ENCODE measurements at regions of chr11 and their contacts with region 1.

Region 1: DNA sequence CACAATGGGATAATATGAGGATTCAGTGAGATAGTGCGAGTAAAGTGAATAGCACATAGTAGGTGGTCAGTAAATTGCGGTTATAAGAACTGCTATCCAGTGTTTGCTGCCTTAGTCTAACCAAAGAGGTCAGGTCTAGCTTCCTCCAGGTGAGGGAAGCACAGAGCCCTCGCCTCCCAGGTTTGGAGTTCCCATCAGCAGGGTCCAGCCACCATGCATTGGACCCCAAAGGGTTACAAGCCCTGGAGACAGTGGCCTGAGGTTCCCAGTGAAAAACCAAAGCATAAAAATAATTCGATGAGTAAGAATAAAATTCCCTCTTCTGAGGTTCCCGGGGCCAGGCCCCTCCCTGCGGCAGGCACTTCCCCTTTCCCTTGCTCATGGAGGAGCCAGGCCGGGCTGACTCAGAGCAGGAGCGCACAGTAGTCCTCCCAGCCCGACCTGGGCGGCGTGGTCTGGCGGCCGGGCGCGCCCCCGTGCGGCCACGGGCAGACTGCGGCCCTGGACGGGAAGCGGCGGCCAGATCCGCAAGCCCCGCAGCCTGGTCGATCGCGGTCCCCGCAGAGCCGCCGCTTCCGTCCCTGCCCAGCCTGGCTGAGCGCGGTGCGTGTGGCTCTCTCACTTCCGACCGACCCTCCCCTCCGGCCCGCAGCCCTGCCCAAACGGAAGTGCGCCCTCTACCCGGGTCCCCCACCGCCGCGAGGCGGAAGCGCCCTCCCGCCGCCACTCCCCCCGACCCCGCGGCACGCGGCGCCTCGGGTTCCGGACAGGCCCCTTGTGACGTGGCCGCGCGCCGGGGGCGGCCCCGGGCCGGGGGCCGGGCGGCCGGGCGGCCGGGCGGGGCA is at the start of gene SLC39A13:
- DNase-seq: peak; percentile 93
- H3K4me3 Mint-ChIP-seq: peak within 1 kb of the TSS; percentile 94
- H3K27ac Mint-ChIP-seq: peak within 1 kb of the TSS; percentile 92
- H3K4me1 Mint-ChIP-seq: peaks cover 21% of the 10 kb centered on the region
- H3K27me3 Mint-ChIP-seq: no peaks in the 10 kb centered on the region
- total RNA-seq, gene SLC39A13: 15.5 and 16.2 TPM in 2 replicates

Region 2: GRCh38 chr11:46936138-46937110 is 471.5 kb before region 1 on chr11 and contains the start of gene CSTPP1:
- intact Hi-C with region 1: loop called (anchors 1 kb)
- DNase-seq: peak; percentile 89
- H3K4me3 Mint-ChIP-seq: peak within 1 kb of the TSS; percentile 92
- H3K27ac Mint-ChIP-seq: peak within 1 kb of the TSS; percentile 88
- H3K4me1 Mint-ChIP-seq: peaks cover 14% of the 10 kb centered on the region
- H3K27me3 Mint-ChIP-seq: peaks cover 7% of the 10 kb centered on the region
- total RNA-seq, gene CSTPP1: 15.1 and 16.7 TPM in 2 replicates

Region 3: DNA sequence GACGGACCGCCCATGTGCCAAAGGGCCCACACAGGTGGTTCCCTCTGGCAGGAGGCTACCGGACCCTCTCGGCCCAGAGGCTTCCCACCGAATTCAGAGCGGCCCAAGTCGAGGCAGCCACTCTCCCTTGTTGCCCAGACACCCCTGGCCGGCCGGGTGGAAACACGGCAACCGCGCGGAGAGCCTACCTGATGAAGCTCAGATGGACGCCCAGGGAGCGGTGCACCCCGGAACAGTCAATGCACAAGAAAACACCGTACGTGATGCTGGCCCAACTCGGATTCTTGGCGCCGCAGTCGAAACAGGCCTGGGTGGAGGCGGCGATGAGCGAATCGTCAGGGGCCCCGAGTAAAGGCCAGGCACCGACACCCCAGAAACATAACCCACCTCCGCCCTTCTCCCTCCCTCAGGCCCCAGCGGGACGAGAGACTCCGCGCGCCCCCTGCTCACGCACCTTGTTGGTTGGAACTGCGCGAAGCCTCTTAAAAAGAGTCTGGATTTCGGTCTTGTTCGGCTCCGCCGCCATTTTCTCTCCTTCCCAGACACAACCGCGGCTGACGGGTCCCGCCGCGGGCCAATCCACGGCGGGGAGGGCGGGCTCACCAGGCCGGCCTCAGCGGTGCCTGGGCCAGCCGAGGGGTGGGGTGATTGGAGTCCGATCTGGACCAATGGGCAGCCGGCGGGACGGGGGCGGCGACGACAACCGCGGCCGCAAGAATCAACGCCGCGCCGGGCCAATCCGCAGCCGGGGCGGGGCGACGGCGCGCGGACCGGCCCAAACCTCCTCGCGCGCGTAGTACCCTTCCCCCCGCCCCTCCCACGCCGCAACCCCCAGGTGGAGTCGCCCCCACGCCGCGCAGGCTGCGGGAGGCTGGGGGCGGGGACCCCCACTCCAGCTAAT is 231.4 kb before region 1 on chr11 and contains the start of gene ARFGAP2:
- intact Hi-C with region 1: loop called (anchors 1 kb)
- DNase-seq: peak; percentile 96
- H3K4me3 Mint-ChIP-seq: peak within 1 kb of the TSS; percentile 97
- H3K27ac Mint-ChIP-seq: peak within 1 kb of the TSS; percentile 100
- H3K4me1 Mint-ChIP-seq: peaks cover 36% of the 10 kb centered on the region
- H3K27me3 Mint-ChIP-seq: no peaks in the 10 kb centered on the region
- total RNA-seq, gene ARFGAP2: 111 and 116 TPM in 2 replicates

Region 4: DNA sequence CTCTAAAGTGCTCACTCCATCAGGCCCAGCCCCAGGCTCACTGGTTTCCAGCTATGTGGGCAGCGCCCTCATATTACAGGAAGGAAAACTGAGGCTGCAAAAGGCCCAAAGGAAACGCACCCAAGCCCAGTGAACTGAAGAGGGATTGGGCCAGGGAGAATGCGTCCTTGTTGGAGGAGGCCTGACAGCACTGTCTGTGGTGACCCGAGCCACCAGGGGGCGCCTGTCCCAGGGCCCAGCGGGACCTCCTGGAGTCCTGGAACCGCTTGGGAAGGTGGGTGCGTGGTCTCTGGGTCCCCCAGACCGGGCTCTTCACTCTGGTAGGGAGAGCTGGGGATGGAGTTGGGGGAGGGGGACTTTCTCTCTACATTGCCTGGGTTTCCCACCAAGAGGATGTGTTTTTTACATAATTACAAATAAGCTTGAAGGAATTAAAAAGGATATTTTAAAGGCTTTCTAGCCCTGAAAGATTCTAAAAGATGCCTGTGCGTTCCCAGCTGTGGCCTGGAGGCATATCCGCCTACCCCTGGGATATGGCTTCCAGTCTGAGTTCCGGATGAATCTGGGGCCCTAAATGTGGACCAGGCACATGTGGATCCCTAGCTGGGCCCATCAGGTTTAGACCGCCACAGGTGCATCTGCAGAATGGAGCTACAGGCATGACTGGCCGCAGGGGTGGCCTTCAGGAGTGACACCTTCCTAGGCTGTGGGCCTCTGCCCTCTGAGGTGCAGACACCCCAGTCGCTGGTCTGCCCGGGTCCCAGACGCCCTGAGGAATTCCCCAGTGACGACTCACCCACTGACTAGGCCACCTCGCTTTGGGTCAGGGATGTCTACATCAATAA is 33.9 kb before region 1 on chr11:
- intact Hi-C with region 1: loop called (anchors 1 kb)
- DNase-seq: peak; percentile 69
- H3K4me3 Mint-ChIP-seq: no peak overlapping the region
- H3K27ac Mint-ChIP-seq: no peak overlapping the region
- H3K4me1 Mint-ChIP-seq: peaks cover 9% of the 10 kb centered on the region
- H3K27me3 Mint-ChIP-seq: peaks cover 3% of the 10 kb centered on the region

Region 5: GRCh38 chr11:47394322-47395222 is 13.4 kb before region 1 on chr11:
- intact Hi-C with region 1: loop called (anchors 2 kb)
- DNase-seq: peak; percentile 53
- H3K4me3 Mint-ChIP-seq: no peak overlapping the region
- H3K27ac Mint-ChIP-seq: peak overlapping the region; percentile 87
- H3K4me1 Mint-ChIP-seq: peaks cover 10% of the 10 kb centered on the region
- H3K27me3 Mint-ChIP-seq: no peaks in the 10 kb centered on the region